CD14-positive monocyte (primary cell): ENCODE measurements at regions of chr15 and their contacts with region 1.

Region 1: DNA sequence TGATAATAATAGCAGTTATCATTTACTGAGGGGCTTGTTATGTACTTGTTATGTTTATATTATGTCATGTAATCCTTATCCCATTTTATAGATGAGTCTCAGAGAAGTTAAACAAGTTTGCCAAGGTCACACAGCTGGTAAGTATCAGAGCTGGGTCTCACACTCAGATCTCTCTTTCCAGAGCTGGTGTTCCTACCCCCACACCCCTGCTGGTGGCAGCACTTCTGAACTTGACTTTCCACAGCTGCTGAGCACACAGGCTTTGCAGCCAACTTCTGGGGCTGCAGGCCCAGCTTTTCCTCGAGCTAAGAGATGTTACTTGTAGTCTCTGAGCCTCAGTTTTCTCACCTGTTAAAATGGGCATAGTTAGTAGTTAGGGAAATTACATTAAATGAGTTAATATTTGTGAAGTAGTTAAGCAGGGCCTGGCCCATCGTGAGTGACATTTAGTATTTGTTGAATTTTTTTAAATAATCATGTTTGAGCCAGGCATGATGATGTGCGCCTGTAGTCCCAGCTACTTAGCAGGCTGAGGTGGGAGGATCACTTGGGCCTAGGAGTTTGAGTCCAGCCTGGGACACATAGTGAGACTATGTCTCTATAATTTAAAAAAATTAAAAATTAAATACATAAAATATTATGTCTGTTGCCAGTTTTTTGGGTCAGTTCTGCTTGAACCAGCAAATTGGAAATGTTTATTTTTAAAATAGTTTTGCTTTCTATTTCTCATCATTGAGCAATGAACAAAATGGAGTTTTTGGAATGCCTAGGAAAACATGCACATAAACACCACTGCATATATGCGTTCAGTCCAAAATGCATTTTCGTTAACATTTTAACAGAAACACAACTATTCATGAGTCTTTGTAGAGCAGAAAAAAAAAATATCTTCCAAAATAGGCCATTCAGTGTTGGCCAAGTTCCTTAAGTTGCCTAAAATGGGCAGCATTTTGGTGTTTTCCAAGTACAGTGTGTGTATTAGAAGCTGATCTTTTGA is 87.3 kb downstream of the SMAD6 start:
- DNase-seq: peak; percentile 7 to 24 (median 9)
- H3K4me3 ChIP-seq: no peak overlapping the region
- H3K4me3 Mint-ChIP-seq: no peak overlapping the region
- H3K27ac ChIP-seq: no peak overlapping the region
- H3K27ac Mint-ChIP-seq: no peak overlapping the region
- H3K4me1 ChIP-seq: no peaks in the 10 kb centered on the region
- H3K4me1 Mint-ChIP-seq: peaks cover 2% of the 10 kb centered on the region
- H3K27me3 ChIP-seq: no peaks in the 10 kb centered on the region
- H3K27me3 Mint-ChIP-seq: peaks cover 2 to 3% (median 3%) of the 10 kb centered on the region in 3 donors
- CTCF ChIP-seq: peak; percentile 40

Region 2: DNA sequence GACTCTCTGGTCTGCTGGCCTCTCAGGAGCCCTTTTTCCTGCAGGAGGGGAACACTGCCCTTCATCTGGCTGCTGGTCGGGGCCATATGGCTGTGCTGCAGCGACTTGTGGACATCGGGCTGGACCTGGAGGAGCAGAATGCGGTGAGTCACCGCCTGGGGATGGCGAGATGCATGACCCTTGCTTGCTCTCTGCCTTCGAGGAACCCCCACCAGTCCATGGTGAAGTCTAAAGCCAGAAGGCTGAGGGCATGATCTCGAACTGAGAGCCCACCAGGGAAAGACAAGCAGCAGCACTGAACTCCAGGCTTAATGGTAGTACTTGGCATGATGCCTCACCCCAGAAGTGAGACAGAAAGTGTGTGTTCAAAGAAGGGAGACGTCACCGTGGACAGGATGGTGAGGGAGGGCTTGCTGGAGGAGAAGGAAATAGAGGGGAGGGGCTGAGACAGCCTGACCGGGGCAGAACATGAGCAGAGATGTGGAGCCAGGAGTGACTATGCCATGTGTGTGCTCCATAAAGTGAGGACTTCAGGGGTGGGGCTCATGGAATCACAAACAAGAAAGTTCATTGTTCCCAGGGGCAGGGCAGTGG is 1858.5 kb before region 1 on chr15:
- intact Hi-C with region 1: no loop called
- DNase-seq: no peak
- H3K4me3 ChIP-seq: no peak overlapping the region
- H3K4me3 Mint-ChIP-seq: no peak overlapping the region
- H3K27ac ChIP-seq: no peak overlapping the region
- H3K27ac Mint-ChIP-seq: peak overlapping the region in 2 of 7 donors; percentile 21 to 22
- H3K4me1 ChIP-seq: no peaks in the 10 kb centered on the region
- H3K4me1 Mint-ChIP-seq: peaks cover 5% of the 10 kb centered on the region
- H3K27me3 ChIP-seq: no peaks in the 10 kb centered on the region
- H3K27me3 Mint-ChIP-seq: peaks cover 2 to 7% (median 2%) of the 10 kb centered on the region in 3 donors
- CTCF ChIP-seq: no peak

Region 3: DNA sequence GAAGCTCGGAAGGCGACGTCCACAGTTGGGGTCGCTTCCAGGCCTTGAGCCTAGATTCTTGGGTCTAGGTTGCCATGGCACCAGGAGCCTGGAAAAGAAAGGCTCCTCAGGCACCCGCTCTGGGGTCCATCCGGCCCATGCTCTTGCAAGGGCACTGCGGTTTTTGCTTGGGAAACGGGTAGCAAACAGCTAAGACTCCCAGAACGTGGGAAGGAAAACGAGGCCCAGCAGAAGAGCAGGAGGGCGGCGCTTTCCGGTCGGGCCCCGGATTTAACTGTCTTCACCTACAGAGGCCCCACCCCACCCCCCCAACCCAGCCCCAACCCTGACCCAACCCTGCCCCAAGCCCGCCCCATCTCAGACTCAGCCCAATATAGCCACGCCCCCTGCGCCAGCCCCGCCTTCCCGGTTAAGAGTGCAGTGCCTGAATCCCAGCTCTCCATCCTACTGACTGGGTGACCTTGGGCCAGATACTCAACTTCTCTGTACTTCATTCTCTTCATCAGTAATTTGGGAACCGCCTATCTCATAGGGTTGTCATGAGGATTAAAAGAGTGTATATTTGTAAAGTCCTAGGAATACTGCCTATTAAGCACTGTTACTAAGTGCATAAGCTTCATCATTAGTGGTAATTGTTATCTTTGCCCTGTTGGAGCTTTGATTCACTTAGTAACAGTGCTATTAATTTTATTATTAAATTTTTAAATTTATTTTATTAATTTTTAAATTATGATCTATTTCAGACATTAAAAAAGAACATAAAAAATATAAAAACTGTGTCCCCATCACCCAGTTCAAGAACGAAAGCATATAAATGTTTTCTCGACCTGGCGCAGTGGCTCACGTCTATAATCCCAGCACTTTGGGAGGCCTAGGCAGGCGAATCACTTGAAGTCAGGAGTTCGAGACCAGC is 115.7 kb before region 1 on chr15:
- intact Hi-C with region 1: no loop called
- DNase-seq: peak; percentile 23 to 46 (median 28)
- H3K4me3 ChIP-seq: no peak overlapping the region
- H3K4me3 Mint-ChIP-seq: no peak overlapping the region
- H3K27ac ChIP-seq: no peak overlapping the region
- H3K27ac Mint-ChIP-seq: peak overlapping the region in 1 of 7 donors; percentile 57
- H3K4me1 ChIP-seq: peaks cover 25 to 26% of the 10 kb centered on the region in 2 donors
- H3K4me1 Mint-ChIP-seq: peaks cover 42% of the 10 kb centered on the region
- H3K27me3 ChIP-seq: no peaks in the 10 kb centered on the region
- H3K27me3 Mint-ChIP-seq: peaks cover 0 to 4% (median 1%) of the 10 kb centered on the region in 3 donors
- CTCF ChIP-seq: no peak

Region 4: DNA sequence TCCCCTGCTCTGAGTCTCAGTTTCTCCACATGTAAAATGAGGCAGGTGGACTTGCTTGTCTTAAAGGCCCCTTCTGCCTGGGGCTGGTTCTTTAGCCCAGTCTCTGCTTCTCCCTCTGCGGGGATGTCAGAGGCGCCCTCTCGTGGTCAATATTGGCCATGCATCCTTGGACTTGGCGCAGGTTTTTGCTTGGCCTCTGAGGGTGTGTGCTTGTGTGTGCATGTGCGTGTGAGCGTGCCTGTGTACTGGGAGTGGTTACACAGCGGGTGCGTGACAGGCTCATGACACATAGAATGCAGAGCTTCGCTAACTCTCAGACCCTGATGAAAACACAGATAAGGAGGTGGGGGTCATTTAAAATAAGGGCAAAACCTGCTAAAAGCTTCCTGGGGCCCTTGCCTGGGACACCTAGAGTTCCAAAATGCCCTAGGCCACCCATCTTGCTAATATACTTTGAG is 73.6 kb after region 1 on chr15:
- intact Hi-C with region 1: loop called in 1 of 2 experiments (anchors 5 kb)
- DNase-seq: peak; percentile 74 to 91 (median 78)
- H3K4me3 ChIP-seq: no peak overlapping the region
- H3K4me3 Mint-ChIP-seq: peak overlapping the region in 1 of 2 donors; percentile 49
- H3K27ac ChIP-seq: no peak overlapping the region
- H3K27ac Mint-ChIP-seq: peak overlapping the region in 2 of 7 donors; percentile 60 to 79
- H3K4me1 ChIP-seq: peaks cover 23 to 28% of the 10 kb centered on the region in 2 donors
- H3K4me1 Mint-ChIP-seq: peaks cover 35% of the 10 kb centered on the region
- H3K27me3 ChIP-seq: no peaks in the 10 kb centered on the region
- H3K27me3 Mint-ChIP-seq: peaks cover 0 to 2% (median 1%) of the 10 kb centered on the region in 3 donors
- CTCF ChIP-seq: peak; percentile 95